ENCODE measurements at regions of chr14 and their contacts with region 1.

Region 1: GRCh38 chr14:101001311-101002069 is 98.0 kb upstream of the RTL1 start:
- DNase-seq: peak; percentile 89
- ATAC-seq: peak; percentile 60
- H3K4me3 ChIP-seq: no peak overlapping the region
- H3K27ac ChIP-seq: no peak overlapping the region
- H3K4me1 ChIP-seq: peaks cover 29% of the 10 kb centered on the region
- H3K27me3 ChIP-seq: no peaks in the 10 kb centered on the region
- CTCF ChIP-seq: no peak
- POLR2A ChIP-seq: no peak
- RAD21 ChIP-seq: no peak; the same call in 1 of the 2 replicates

Region 2: GRCh38 chr14:101171650-101172049 is 170.2 kb after region 1 on chr14:
- CTCF ChIA-PET with region 1: no interaction called
- POLR2A ChIA-PET with region 1: no interaction called
- dilution Hi-C with region 1: no loop called
- in situ Hi-C with region 1: no loop called
- intact Hi-C with region 1: loop called (anchors 2 kb)
- DNase-seq: no peak
- ATAC-seq: no peak
- H3K4me3 ChIP-seq: no peak overlapping the region
- H3K27ac ChIP-seq: no peak overlapping the region
- H3K4me1 ChIP-seq: no peaks in the 10 kb centered on the region
- H3K27me3 ChIP-seq: peaks cover 1% of the 10 kb centered on the region; the same call in 1 of the 2 replicates
- CTCF ChIP-seq: no peak
- POLR2A ChIP-seq: no peak
- RAD21 ChIP-seq: no peak

Measured in IMR-90 (cell line).